Mammary epithelial cell (primary cell): ENCODE measurements at regions of chr16 and their contacts with region 1.

Region 1: GRCh38 chr16:12829096-12829888 is 25.6 kb upstream of the CPPED1 start:
- DNase-seq: no peak
- H3K4me3 ChIP-seq: no peak overlapping the region
- H3K27ac ChIP-seq: no peak overlapping the region
- H3K4me1 ChIP-seq: no peaks in the 10 kb centered on the region
- H3K27me3 ChIP-seq: no peaks in the 10 kb centered on the region
- CTCF ChIP-seq: no peak

Region 2: DNA sequence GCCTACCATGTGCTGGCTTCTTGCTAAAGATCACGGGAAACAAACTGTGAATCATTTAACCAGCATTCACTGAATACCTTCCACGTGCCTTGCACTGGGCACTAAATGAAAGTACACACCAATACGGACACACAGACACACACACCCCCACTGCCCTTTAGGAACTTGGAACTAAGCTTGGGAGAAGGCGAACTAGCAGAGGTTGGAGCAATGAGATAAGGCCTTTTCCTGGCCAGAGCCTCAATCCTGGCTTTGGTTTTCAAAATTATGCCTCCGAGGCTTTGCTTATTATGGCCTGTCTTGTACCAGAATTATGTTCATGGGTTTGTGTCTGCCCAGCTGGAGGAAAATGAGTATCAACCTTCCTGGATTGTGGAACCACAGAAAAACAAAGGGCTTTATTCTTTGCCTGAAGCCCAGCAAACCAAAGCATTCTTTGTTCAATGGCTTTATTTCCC is 57.9 kb before region 1 on chr16:
- CTCF ChIA-PET with region 1: no interaction called
- dilution Hi-C with region 1: loop called (anchors 5 kb)
- in situ Hi-C with region 1: no loop called
- intact Hi-C with region 1: no loop called
- DNase-seq: peak; percentile 48
- H3K4me3 ChIP-seq: no peak overlapping the region
- H3K27ac ChIP-seq: no peak overlapping the region
- H3K4me1 ChIP-seq: no peaks in the 10 kb centered on the region
- H3K27me3 ChIP-seq: no peaks in the 10 kb centered on the region
- CTCF ChIP-seq: no peak

Region 3: GRCh38 chr16:12869698-12870427 is 40.6 kb after region 1 on chr16:
- CTCF ChIA-PET with region 1: no interaction called
- dilution Hi-C with region 1: loop called (anchors 5 kb)
- in situ Hi-C with region 1: no loop called
- intact Hi-C with region 1: no loop called
- DNase-seq: peak; percentile 32
- H3K4me3 ChIP-seq: no peak overlapping the region
- H3K27ac ChIP-seq: no peak overlapping the region
- H3K4me1 ChIP-seq: peaks cover 7% of the 10 kb centered on the region
- H3K27me3 ChIP-seq: no peaks in the 10 kb centered on the region
- CTCF ChIP-seq: no peak